ENCODE measurements at regions of chr2 and their contacts with region 1.

Region 1: GRCh38 chr2:60794277-60794863 is 38.3 kb downstream of the PAPOLG start:
- DNase-seq: peak; percentile 58
- H3K4me3 ChIP-seq: no peak overlapping the region
- H3K27ac ChIP-seq: no peak overlapping the region
- H3K4me1 ChIP-seq: peaks cover 13% of the 10 kb centered on the region
- H3K27me3 ChIP-seq: no peaks in the 10 kb centered on the region
- CTCF ChIP-seq: peak; percentile 68

Region 2: GRCh38 chr2:59851836-59852475 is 942.4 kb before region 1 on chr2:
- CTCF ChIA-PET with region 1: no interaction called
- POLR2A ChIA-PET with region 1: no interaction called
- intact Hi-C with region 1: no loop called
- DNase-seq: no peak
- H3K4me3 ChIP-seq: no peak overlapping the region
- H3K27ac ChIP-seq: no peak overlapping the region
- H3K4me1 ChIP-seq: no peaks in the 10 kb centered on the region
- H3K27me3 ChIP-seq: no peaks in the 10 kb centered on the region
- CTCF ChIP-seq: no peak

Region 3: GRCh38 chr2:60717691-60718090 is 76.7 kb before region 1 on chr2:
- CTCF ChIA-PET with region 1: no interaction called
- POLR2A ChIA-PET with region 1: interaction called, 13 read pairs
- intact Hi-C with region 1: no loop called
- DNase-seq: no peak
- H3K4me3 ChIP-seq: no peak overlapping the region
- H3K27ac ChIP-seq: no peak overlapping the region
- H3K4me1 ChIP-seq: no peaks in the 10 kb centered on the region
- H3K27me3 ChIP-seq: no peaks in the 10 kb centered on the region
- CTCF ChIP-seq: no peak

Region 4: GRCh38 chr2:60998628-60999545 is 204.5 kb after region 1 on chr2:
- CTCF ChIA-PET with region 1: interaction called, 3 read pairs
- POLR2A ChIA-PET with region 1: no interaction called
- intact Hi-C with region 1: loop called (anchors 2 kb)
- DNase-seq: peak; percentile 69
- H3K4me3 ChIP-seq: no peak overlapping the region
- H3K27ac ChIP-seq: no peak overlapping the region
- H3K4me1 ChIP-seq: no peaks in the 10 kb centered on the region
- H3K27me3 ChIP-seq: no peaks in the 10 kb centered on the region
- CTCF ChIP-seq: peak; percentile 73